ENCODE measurements at regions of chr11 and their contacts with region 1.

Region 1: GRCh38 chr11:61071208-61071681 is 31.0 kb upstream of the CD5 start:
- DNase-seq: peak; percentile 83
- H3K4me3 Mint-ChIP-seq: peak overlapping the region; percentile 40
- H3K27ac Mint-ChIP-seq: peak overlapping the region; percentile 93
- H3K4me1 Mint-ChIP-seq: peaks cover 91% of the 10 kb centered on the region
- H3K27me3 Mint-ChIP-seq: no peaks in the 10 kb centered on the region

Region 2: GRCh38 chr11:61049859-61050258 is 21.4 kb before region 1 on chr11:
- CTCF ChIA-PET with region 1: interaction called, 3 read pairs
- POLR2A ChIA-PET with region 1: interaction called, 227 read pairs
- DNase-seq: no peak
- H3K4me3 Mint-ChIP-seq: no peak overlapping the region
- H3K27ac Mint-ChIP-seq: peak overlapping the region; percentile 65
- H3K4me1 Mint-ChIP-seq: peaks cover 77% of the 10 kb centered on the region
- H3K27me3 Mint-ChIP-seq: no peaks in the 10 kb centered on the region

Region 3: DNA sequence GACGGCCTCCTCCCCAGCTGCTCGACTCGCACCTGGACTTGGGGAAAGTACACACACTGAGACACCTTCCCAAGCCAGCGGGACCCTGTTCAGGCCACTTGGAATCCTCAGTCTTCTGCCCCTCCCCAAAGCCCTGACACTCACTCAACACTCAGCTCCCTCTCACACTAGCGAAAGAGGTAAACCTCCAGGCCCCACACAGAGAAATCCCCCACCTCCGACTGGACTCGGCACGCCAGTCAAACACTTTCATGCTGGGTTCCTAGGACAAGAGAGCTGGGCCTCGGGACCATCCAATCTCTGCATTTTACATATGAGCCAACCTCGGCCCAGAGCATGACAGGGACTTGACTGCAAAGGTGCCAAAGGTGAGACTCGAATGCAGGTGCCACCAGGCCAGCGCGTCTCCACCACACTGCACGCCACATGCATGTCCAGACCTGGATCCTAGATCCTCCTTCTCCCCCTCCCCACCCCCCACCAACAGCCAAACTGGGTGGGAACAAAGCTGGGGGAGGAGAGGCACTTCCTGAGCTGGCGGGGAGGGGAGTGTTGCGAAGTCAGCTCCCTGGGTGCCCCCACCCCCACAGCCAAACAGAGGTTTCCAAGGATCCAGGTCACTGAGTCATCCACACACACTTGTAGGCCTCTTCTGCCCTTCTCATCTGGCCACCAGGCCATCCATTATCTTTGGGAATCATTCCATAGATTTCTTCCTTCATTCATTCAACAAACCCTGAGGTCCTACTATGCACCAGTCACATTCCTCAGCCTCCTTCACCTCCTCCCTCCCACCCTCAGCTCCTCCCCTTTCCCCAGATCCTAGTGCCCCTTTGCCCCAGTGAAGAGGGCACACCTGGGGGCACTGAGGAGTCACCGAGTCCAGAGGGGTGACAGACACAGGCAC is 20.4 kb after region 1 on chr11:
- CTCF ChIA-PET with region 1: no interaction called
- POLR2A ChIA-PET with region 1: interaction called, 133 read pairs
- DNase-seq: peak; percentile 54
- H3K4me3 Mint-ChIP-seq: peak overlapping the region; percentile 77
- H3K27ac Mint-ChIP-seq: peak overlapping the region; percentile 96
- H3K4me1 Mint-ChIP-seq: peaks cover 69% of the 10 kb centered on the region
- H3K27me3 Mint-ChIP-seq: no peaks in the 10 kb centered on the region

Region 4: DNA sequence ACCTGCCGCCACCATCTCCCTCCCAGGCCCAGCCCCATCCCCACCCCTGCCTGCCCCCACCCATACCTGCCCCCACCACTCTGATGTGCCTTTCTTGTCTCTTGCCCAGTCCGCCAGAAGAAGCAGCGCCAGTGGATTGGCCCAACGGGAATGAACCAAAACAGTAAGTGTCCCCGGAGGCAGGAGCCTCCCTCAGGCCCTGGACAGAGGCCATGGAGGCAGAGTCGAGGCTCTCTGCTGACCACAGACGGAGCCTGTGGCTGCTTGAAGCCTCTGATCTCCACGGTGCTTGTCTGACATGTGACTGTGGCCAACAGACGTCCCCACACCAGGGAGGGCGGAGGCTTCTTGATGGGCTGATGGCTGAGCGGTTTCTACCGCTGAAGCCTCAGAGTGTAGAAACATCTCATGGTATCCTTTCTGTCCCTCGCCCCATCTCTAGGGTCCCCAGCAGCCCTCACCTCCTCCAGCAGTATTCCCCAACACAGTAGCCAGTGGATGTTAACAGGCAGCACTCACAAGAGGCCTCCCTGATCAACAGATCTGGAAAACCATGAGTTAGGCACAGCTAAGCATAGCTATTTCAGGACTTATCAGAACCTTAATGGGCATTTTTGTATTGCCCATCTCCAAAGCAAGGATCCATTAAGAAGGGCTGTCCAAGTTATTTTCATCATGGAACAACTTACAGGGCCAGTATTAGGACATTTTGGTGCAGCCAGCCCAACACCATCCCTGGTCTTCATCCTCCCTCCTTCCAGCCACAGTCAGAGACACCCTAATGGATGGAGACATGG is 52.7 kb after region 1 on chr11:
- CTCF ChIA-PET with region 1: no interaction called
- POLR2A ChIA-PET with region 1: no interaction called
- DNase-seq: no peak
- H3K4me3 Mint-ChIP-seq: no peak overlapping the region
- H3K27ac Mint-ChIP-seq: peak overlapping the region; percentile 18
- H3K4me1 Mint-ChIP-seq: peaks cover 42% of the 10 kb centered on the region
- H3K27me3 Mint-ChIP-seq: no peaks in the 10 kb centered on the region

Region 5: GRCh38 chr11:61141601-61142028 is 70.4 kb after region 1 on chr11:
- CTCF ChIA-PET with region 1: no interaction called
- POLR2A ChIA-PET with region 1: no interaction called
- DNase-seq: no peak
- H3K4me3 Mint-ChIP-seq: no peak overlapping the region
- H3K27ac Mint-ChIP-seq: no peak overlapping the region
- H3K4me1 Mint-ChIP-seq: no peaks in the 10 kb centered on the region
- H3K27me3 Mint-ChIP-seq: no peaks in the 10 kb centered on the region

Measured in activated CD4-positive, alpha-beta memory T cell treated with anti-CD3 and anti-CD28 coated beads, Interleukin-2, amount 10 ng/mL, durations not matched to agents 7 days and 5 days (primary cell).